ENCODE measurements at regions of chr18 and their contacts with region 1.

Region 1: GRCh38 chr18:42028247-42028832 is 73.3 kb downstream of the PIK3C3 start:
- DNase-seq: peak; percentile 38
- ATAC-seq: peak; percentile 86
- H3K4me3 ChIP-seq: no peak overlapping the region
- H3K27ac ChIP-seq: no peak overlapping the region
- H3K4me1 ChIP-seq: no peaks in the 10 kb centered on the region
- H3K27me3 ChIP-seq: no peaks in the 10 kb centered on the region
- CTCF ChIP-seq: peak; percentile 70
- POLR2A ChIP-seq: no peak
- RAD21 ChIP-seq: peak; percentile 37; the same call in 1 of the 2 replicates

Region 2: DNA sequence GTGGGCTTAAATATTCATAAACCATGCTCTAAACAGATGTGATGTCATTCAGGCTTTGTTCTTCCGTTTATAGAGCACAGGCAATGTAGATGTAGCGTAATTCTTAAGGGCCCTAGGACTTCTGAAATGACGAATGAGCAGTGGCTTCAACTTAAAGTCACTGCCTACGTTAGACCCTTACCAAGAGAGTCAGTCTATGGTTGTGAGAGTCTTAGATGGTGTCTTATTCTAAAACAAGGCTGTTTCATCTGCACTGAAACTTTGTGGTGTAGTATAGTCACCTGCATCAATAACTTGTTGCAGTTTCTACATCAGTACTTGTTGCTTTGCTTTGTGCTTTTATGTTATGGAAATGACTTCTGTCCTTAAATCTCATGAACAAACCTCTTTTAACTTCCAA is 17.3 kb before region 1 on chr18:
- CTCF ChIA-PET with region 1: interaction called, 19 read pairs
- POLR2A ChIA-PET with region 1: no interaction called
- dilution Hi-C with region 1: no loop called
- in situ Hi-C with region 1: no loop called
- intact Hi-C with region 1: no loop called
- DNase-seq: no peak
- ATAC-seq: no peak
- H3K4me3 ChIP-seq: no peak overlapping the region
- H3K27ac ChIP-seq: no peak overlapping the region
- H3K4me1 ChIP-seq: no peaks in the 10 kb centered on the region
- H3K27me3 ChIP-seq: no peaks in the 10 kb centered on the region
- CTCF ChIP-seq: no peak
- POLR2A ChIP-seq: no peak
- RAD21 ChIP-seq: no peak

Region 3: DNA sequence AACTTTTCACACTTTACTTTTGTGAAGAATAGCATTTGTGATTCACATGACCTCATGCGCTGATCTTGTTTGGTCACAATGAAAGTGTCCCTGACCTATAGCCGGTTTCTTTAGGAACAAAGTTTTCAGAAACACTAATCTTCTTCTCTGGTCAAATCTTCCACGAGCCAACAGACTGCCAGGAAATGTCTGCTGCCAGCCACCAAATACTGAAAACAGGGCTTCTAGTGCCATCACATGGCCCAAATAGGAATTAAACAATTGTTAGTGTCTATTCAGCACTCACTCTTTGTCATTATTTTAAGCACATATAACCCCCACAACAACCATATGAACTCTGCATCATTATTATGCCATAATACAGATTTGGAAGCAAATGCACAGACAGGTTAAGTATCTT is 1535.4 kb after region 1 on chr18:
- CTCF ChIA-PET with region 1: interaction called, 3 read pairs
- POLR2A ChIA-PET with region 1: no interaction called
- dilution Hi-C with region 1: no loop called
- in situ Hi-C with region 1: no loop called
- intact Hi-C with region 1: loop called (anchors 5 kb)
- DNase-seq: peak; percentile 6
- ATAC-seq: peak; percentile 72
- H3K4me3 ChIP-seq: no peak overlapping the region
- H3K27ac ChIP-seq: no peak overlapping the region
- H3K4me1 ChIP-seq: no peaks in the 10 kb centered on the region
- H3K27me3 ChIP-seq: no peaks in the 10 kb centered on the region
- CTCF ChIP-seq: peak; percentile 32
- POLR2A ChIP-seq: no peak
- RAD21 ChIP-seq: peak; percentile 52

Measured in IMR-90 (cell line).